ENCODE measurements at regions of chr7 and their contacts with region 1.

Region 1: DNA sequence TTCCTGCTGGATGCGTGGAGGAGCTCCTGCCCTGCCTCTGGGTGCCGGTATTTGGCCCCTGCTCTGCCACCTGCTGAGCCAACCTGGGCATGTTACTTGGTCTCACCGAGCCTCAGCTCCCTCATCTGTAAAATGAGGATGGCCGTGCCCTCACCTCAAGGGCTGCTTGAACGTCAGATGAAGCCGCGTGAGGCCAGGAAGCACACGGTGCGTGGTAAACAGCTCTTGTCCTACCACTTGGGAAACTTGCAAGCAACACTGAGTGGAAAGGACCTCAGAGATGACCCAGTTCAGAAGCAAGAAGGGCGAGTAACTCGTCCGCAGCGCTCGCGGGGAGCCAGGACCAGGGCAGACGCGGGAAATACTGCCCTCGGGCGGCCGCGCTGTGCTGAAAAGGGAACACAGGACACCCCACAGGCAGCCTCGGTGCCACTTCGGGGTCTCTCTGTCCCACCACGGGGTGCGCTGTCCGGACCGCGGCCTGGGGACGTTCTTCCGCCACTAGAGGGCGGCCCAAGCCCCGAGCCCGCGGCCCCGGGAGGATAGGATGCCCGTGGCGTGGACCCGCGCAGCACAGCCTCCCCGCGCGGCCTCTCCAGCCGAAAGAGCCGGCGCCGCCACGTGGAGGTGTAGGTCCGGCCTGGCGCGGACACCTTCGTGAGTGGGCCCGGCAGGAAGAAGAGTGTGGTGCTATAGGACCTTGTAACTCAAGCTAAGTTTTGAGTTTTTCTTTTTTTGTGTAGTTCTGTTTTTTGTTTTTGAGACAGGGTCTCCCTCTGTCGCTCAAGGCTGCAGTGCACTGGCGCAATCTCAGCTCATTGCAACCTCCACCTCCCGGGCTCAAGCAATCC is 94.1 kb downstream of the PRKAG2 start:
- DNase-seq: peak; percentile 32
- ATAC-seq: peak; percentile 92
- H3K4me3 ChIP-seq: peak overlapping the region; percentile 23 to 56
- H3K27ac ChIP-seq: no peak overlapping the region
- H3K4me1 ChIP-seq: no peaks in the 10 kb centered on the region
- H3K27me3 ChIP-seq: no peaks in the 10 kb centered on the region
- CTCF ChIP-seq: peak; percentile 99

Region 2: DNA sequence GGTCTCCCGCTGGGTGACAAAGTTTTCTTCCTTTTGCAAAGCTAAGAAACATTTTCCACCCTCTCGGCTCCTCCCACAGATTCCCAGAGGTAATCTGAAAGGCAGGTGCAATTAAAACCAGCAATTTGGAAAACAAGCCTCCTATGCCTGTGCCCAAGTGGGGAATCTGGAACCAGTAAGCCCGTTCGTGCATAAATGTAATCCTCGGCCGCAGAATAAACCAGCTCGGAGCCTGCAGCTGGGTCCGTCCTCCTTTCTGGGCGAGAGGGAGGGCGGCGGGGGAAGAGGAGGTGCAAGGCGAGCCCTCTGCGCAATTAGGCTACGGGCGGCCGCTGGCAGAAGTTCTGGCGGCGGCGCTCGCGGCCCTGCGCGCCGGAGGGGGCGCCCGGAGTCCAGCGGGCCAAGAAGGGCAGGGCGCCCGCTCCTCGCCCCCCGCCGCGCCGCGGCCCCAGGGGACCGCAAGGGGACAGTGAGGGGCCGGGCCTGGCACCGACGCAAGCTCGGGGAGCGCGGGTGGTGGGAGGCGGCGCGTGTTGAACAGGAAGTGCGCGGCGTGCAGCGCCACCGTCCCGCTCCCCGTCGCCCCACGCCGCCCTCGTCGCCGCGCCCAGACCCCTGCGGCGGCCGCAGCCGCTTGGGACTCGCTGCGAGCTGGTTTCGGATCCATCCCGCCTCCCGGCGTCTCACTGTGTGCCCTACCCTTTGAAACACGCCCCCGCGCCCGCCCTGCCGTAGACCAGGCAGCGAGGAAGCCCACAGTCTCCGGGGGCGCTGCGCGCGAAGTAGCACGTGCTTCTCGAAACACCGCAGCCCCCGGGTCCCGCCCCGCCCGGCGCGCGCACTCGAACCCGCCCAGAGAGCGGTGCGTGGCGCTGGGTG is 94.3 kb after region 1 on chr7 and contains the start of gene PRKAG2:
- CTCF ChIA-PET with region 1: interaction called, 4 read pairs
- POLR2A ChIA-PET with region 1: no interaction called
- in situ Hi-C with region 1: no loop called
- intact Hi-C with region 1: loop called (anchors 10 kb)
- DNase-seq: no peak
- ATAC-seq: peak; percentile 61
- H3K4me3 ChIP-seq: peak within 1 kb of the TSS; percentile 65 to 69
- H3K27ac ChIP-seq: no peak within 1 kb of the TSS
- H3K4me1 ChIP-seq: peaks cover 3% of the 10 kb centered on the region
- H3K27me3 ChIP-seq: no peaks in the 10 kb centered on the region; the same call in none of the 2 replicates
- CTCF ChIP-seq: peak; percentile 31; the same call in 1 of the 2 replicates
- total RNA-seq, gene PRKAG2: 71.6 TPM

Region 3: DNA sequence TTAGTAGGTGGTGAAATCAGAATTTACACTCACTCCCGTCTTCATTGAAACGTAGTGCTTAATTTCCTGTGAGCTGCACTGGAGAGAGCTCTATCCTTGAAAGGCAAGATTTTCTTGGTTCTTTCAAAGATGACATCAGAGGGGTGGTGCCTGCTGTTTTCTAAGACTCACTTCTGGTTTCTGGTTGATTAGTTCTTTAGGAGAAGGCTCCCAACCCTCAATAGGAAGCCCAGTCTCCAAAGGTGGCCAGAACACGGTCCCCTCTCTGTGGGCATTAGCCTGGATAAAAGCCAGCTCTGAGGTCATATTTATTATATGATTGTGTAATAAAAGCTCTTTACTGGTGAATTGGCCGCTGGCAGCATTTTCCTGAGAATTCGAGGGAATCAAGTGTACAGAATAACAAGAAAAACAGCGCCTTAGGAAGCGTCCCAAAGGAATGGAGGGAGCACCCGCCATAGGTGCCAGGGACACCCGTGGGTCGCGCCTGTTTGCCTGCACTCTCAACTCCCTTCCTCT is 149.6 kb after region 1 on chr7:
- CTCF ChIA-PET with region 1: interaction called, 3 read pairs
- POLR2A ChIA-PET with region 1: no interaction called
- in situ Hi-C with region 1: no loop called
- intact Hi-C with region 1: loop called (anchors 5 kb)
- DNase-seq: peak; percentile 24
- ATAC-seq: peak; percentile 58
- H3K4me3 ChIP-seq: peak overlapping the region; percentile 52 to 81
- H3K27ac ChIP-seq: no peak overlapping the region
- H3K4me1 ChIP-seq: no peaks in the 10 kb centered on the region
- H3K27me3 ChIP-seq: peaks cover 5% of the 10 kb centered on the region; the same call in 1 of the 2 replicates
- CTCF ChIP-seq: no peak

Measured in Panc1 (cell line).